Activated B cell treated with CpG ODN at 0.5 μM for 24 hours (primary cell): ENCODE measurements at regions of chr11 and their contacts with region 1.

Region 1: GRCh38 chr11:9613118-9613829 is 39.8 kb downstream of the WEE1 start:
- DNase-seq: peak; percentile 80
- ATAC-seq: peak; percentile 35
- H3K4me3 Mint-ChIP-seq: peak overlapping the region; percentile 92
- H3K27ac Mint-ChIP-seq: peak overlapping the region; percentile 100
- H3K4me1 Mint-ChIP-seq: peaks cover 92% of the 10 kb centered on the region
- H3K27me3 Mint-ChIP-seq: no peaks in the 10 kb centered on the region
- CTCF ChIP-seq: peak; percentile 74

Region 2: GRCh38 chr11:9280655-9281301 is 332.5 kb before region 1 on chr11:
- CTCF ChIA-PET with region 1: no interaction called
- POLR2A ChIA-PET with region 1: no interaction called
- intact Hi-C with region 1: no loop called
- DNase-seq: no peak
- ATAC-seq: peak; percentile 54
- H3K4me3 Mint-ChIP-seq: no peak overlapping the region
- H3K27ac Mint-ChIP-seq: peak overlapping the region; percentile 63
- H3K4me1 Mint-ChIP-seq: peaks cover 9% of the 10 kb centered on the region
- H3K27me3 Mint-ChIP-seq: no peaks in the 10 kb centered on the region
- CTCF ChIP-seq: no peak

Region 3: DNA sequence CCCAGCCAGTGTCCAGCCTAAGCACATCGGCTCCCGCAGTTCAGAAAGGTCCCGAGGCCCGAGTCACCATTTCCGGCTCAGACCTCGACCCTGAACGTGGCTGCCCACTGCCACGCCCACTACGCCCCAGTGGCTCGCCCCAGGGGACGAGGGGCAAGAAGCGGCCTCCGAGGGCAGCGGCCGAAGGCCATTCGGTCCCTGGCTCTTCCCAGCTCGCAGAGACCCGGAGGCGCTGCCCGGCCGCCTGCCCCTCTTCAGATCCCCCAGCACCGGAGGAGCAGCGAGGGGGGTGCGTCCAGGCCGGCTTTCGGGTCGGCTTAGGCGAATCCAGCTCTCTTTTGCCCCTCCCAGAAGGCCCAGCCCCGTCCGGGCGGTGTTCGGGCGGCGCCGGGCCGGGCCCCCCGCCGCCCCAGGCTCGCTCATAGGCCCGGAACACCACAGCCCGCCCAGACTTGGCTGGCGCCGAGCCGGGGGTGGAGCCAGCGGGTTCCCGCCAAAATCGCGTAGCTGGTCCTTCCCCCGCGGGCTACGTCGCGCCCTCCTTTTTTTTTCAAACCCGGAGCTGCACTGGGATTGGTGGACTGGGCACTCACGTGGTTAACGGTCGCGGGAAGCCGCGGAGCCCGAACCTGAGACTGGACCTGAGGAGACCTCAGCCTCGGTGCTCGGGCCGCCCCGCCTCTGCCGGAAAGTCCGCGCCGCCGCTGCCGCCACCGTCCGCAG is 40.1 kb before region 1 on chr11 and contains the start of gene WEE1:
- CTCF ChIA-PET with region 1: interaction called, 24 read pairs
- POLR2A ChIA-PET with region 1: interaction called, 46 read pairs
- intact Hi-C with region 1: loop called (anchors 1 kb)
- DNase-seq: peak; percentile 97
- ATAC-seq: peak; percentile 90
- H3K4me3 Mint-ChIP-seq: peak within 1 kb of the TSS; percentile 95
- H3K27ac Mint-ChIP-seq: peak within 1 kb of the TSS; percentile 85
- H3K4me1 Mint-ChIP-seq: peaks cover 69% of the 10 kb centered on the region
- H3K27me3 Mint-ChIP-seq: no peaks in the 10 kb centered on the region
- CTCF ChIP-seq: no peak
- total RNA-seq, gene WEE1: 29.4 and 33.7 TPM in 2 replicates

Region 4: GRCh38 chr11:9626496-9627394 is 13.5 kb after region 1 on chr11:
- CTCF ChIA-PET with region 1: interaction called, 5 read pairs
- POLR2A ChIA-PET with region 1: interaction called, 53 read pairs
- intact Hi-C with region 1: no loop called
- DNase-seq: no peak
- ATAC-seq: no peak
- H3K4me3 Mint-ChIP-seq: no peak overlapping the region
- H3K27ac Mint-ChIP-seq: peak overlapping the region; percentile 70
- H3K4me1 Mint-ChIP-seq: peaks cover 66% of the 10 kb centered on the region
- H3K27me3 Mint-ChIP-seq: no peaks in the 10 kb centered on the region
- CTCF ChIP-seq: no peak

Region 5: DNA sequence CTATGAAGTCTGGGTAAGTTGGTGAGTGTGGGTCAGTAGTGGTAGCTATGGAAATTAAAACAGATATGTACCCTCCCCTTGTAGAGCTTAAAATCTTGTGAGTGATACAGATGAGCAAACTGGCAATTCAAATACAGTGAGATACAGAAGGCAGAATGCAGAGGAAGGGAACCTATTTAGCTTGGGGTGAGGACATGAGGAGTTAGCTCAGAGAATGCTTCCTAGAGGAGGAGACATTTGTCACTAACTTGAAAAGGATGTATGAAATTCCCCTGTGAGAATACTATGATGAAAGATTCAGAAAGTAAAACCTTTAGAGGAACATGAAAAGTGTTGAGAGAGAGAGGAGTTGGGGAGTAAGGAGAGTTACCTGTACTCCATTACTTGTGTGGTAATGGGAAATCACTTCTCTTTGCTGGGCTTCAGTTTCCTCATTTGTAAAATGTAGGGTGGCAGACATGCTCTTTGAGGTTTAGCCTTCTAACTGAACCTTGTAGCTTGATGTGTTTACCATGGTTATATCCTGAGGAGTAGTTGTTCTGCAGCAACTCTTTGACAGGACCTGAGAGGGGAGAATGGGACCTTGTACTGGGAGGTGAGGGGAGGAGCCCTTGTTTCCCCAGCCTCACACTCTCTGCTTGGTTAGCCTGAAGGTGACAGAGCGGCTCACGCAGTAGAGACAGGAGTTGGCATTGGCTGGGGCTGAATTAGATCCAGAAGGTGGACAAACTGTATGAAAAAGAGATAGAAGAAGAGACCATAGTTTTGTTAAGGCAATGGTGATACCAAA is 68.5 kb after region 1 on chr11:
- CTCF ChIA-PET with region 1: interaction called, 11 read pairs
- POLR2A ChIA-PET with region 1: interaction called, 55 read pairs
- intact Hi-C with region 1: no loop called
- DNase-seq: no peak
- ATAC-seq: peak; percentile 64
- H3K4me3 Mint-ChIP-seq: no peak overlapping the region
- H3K27ac Mint-ChIP-seq: no peak overlapping the region
- H3K4me1 Mint-ChIP-seq: peaks cover 60% of the 10 kb centered on the region
- H3K27me3 Mint-ChIP-seq: no peaks in the 10 kb centered on the region
- CTCF ChIP-seq: no peak

Region 6: GRCh38 chr11:9739123-9739894 is 126.0 kb after region 1 on chr11:
- CTCF ChIA-PET with region 1: interaction called, 12 read pairs
- POLR2A ChIA-PET with region 1: interaction called, 13 read pairs
- intact Hi-C with region 1: no loop called
- DNase-seq: no peak
- ATAC-seq: peak; percentile 83
- H3K4me3 Mint-ChIP-seq: peak overlapping the region; percentile 77
- H3K27ac Mint-ChIP-seq: peak overlapping the region; percentile 97
- H3K4me1 Mint-ChIP-seq: peaks cover 75% of the 10 kb centered on the region
- H3K27me3 Mint-ChIP-seq: no peaks in the 10 kb centered on the region
- CTCF ChIP-seq: no peak

Region 7: DNA sequence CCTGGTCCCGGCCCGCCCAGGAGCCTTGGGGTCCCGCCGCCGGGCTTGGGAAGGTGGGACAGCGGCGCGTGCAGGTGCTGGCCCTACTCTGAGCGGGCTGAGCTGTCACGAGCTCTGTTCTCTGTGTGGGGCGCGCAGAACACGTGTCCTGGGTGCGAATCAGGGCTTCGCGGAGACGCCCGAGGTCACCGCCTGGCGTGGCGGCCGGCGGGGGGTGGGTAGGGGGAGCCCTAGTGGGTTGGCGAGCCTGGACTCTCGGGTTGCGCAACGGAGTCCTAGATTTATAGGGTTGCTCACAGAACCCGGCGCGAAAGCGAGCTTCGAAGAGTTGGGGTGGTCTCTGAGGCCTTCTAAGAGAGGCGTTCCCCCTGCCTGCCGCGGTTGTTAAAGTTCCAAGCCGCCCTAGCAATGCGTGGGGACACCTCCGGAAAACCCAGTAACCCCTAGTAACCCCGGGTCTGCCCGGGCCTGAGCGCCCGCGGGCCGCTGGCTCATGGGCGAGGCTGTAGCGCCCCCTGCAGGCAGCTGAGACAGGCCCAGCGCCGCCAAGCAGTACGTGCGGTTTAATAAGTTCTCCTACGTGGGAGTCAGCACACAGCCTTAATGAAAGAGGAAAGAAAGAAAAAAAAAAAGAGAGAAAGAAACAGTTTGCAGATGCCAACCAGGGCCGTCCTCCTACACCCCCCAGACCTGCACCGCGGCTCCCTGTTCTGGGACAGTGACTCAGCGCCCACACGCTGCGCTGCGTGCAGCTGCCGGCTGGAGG is 694.4 kb after region 1 on chr11:
- CTCF ChIA-PET with region 1: interaction called, 6 read pairs
- POLR2A ChIA-PET with region 1: interaction called, 5 read pairs
- intact Hi-C with region 1: loop called (anchors 2 kb)
- DNase-seq: peak; percentile 75
- ATAC-seq: peak; percentile 76
- H3K4me3 Mint-ChIP-seq: peak overlapping the region; percentile 97
- H3K27ac Mint-ChIP-seq: peak overlapping the region; percentile 67
- H3K4me1 Mint-ChIP-seq: peaks cover 44% of the 10 kb centered on the region
- H3K27me3 Mint-ChIP-seq: peaks cover 8% of the 10 kb centered on the region
- CTCF ChIP-seq: peak; percentile 95